Activated T-helper 2 cell treated with anti-CD3 and anti-CD28 coated beads, Interferon-gamma antibody, Interleukin-2, Interleukin-4, amounts not matched to agents 10 μg/mL and 5 μg/mL and 100 μg/mL, durations not matched to agents 14 hours and 24 hours and 36 hours (primary cell): ENCODE measurements at regions of chr18 and their contacts with region 1.

Region 1: GRCh38 chr18:24413148-24413547 is 13.3 kb upstream of the IMPACT start:
- DNase-seq: no peak
- H3K4me3 Mint-ChIP-seq: no peak overlapping the region
- H3K27ac Mint-ChIP-seq: no peak overlapping the region
- H3K4me1 Mint-ChIP-seq: peaks cover 26% of the 10 kb centered on the region
- H3K27me3 Mint-ChIP-seq: peaks cover 41% of the 10 kb centered on the region

Region 2: GRCh38 chr18:24014062-24014985 is 398.8 kb before region 1 on chr18 and contains the start of gene TTC39C:
- intact Hi-C with region 1: loop called (anchors 5 kb)
- DNase-seq: peak; percentile 80
- H3K4me3 Mint-ChIP-seq: peak within 1 kb of the TSS; percentile 92
- H3K27ac Mint-ChIP-seq: peak within 1 kb of the TSS; percentile 84
- H3K4me1 Mint-ChIP-seq: peaks cover 73% of the 10 kb centered on the region
- H3K27me3 Mint-ChIP-seq: no peaks in the 10 kb centered on the region
- total RNA-seq, gene TTC39C: 14.3 and 20.1 TPM in 2 replicates

Region 3: GRCh38 chr18:24368749-24369148 is 44.4 kb before region 1 on chr18:
- intact Hi-C with region 1: loop called (anchors 1 kb)
- DNase-seq: no peak
- H3K4me3 Mint-ChIP-seq: no peak overlapping the region
- H3K27ac Mint-ChIP-seq: no peak overlapping the region
- H3K4me1 Mint-ChIP-seq: peaks cover 25% of the 10 kb centered on the region
- H3K27me3 Mint-ChIP-seq: peaks cover 25% of the 10 kb centered on the region

Region 4: DNA sequence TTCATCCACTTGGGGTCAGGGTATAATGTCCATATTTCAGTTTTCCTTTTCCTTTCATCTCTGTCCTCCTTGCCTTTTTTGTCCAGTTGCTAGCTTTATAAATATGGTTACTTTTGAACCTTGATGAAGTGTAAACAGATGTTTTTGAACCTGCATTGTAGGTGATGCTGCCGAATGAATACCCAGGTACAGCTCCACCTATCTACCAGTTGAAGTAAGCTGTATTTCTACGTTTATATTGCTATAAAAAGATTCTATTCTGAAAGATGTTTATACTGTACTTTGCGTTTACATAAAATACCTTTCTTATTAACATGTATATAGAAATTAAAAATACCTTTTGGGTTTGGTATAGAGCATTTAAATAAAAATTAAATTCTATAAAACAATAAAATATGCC is 15.6 kb after region 1 on chr18:
- intact Hi-C with region 1: loop called (anchors 2 kb)
- DNase-seq: no peak
- H3K4me3 Mint-ChIP-seq: no peak overlapping the region
- H3K27ac Mint-ChIP-seq: no peak overlapping the region
- H3K4me1 Mint-ChIP-seq: peaks cover 14% of the 10 kb centered on the region
- H3K27me3 Mint-ChIP-seq: peaks cover 24% of the 10 kb centered on the region

Region 5: DNA sequence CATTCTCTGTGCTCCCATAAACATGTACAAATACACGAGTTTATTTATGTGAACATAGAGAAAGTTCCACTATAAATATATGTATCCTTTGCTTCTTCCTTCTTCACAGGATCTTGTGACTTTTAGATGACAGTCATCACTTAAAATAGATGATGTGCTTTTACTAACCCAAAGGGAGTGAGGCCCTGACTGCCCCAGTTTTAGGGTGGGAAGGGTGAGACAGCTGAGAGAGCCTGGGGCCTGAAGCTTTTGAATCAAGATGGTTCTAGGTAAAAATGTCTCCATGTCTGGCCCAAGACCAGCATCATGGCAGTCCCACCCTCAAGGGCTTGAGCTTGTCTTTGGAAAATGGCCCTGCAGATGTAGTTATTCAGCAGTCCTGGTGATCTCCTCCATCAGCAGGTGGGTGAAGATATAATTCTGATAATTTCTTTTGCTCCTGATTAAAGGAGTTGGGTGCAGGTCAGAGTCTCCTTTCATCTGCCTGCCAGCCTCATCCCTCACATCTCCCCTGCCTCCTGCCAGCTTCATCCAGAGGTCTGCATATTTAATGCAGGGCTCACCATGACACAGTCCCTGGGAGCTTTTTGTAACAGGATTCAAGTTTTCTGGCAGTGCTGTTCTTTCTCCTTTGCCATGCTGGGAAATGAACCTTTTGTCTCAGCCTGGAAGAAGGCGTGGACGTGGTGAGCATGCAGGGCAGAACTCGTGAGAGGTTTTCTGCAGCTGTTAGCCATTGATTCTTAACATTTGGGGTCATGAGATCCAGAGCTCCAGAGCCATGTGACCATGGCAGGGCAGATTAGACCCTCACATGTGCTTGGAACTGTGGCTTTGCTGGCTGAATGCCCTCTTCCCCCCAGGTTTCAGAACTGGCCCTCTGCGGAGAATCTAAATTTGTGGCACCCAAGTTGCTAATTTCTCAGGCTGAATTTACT is 50.0 kb after region 1 on chr18:
- intact Hi-C with region 1: loop called (anchors 1 kb)
- DNase-seq: no peak
- H3K4me3 Mint-ChIP-seq: no peak overlapping the region
- H3K27ac Mint-ChIP-seq: no peak overlapping the region
- H3K4me1 Mint-ChIP-seq: peaks cover 55% of the 10 kb centered on the region
- H3K27me3 Mint-ChIP-seq: peaks cover 34% of the 10 kb centered on the region

Region 6: GRCh38 chr18:24482821-24483220 is 69.7 kb after region 1 on chr18:
- intact Hi-C with region 1: no loop called
- DNase-seq: no peak
- H3K4me3 Mint-ChIP-seq: no peak overlapping the region
- H3K27ac Mint-ChIP-seq: no peak overlapping the region
- H3K4me1 Mint-ChIP-seq: peaks cover 4% of the 10 kb centered on the region
- H3K27me3 Mint-ChIP-seq: peaks cover 65% of the 10 kb centered on the region

Region 7: DNA sequence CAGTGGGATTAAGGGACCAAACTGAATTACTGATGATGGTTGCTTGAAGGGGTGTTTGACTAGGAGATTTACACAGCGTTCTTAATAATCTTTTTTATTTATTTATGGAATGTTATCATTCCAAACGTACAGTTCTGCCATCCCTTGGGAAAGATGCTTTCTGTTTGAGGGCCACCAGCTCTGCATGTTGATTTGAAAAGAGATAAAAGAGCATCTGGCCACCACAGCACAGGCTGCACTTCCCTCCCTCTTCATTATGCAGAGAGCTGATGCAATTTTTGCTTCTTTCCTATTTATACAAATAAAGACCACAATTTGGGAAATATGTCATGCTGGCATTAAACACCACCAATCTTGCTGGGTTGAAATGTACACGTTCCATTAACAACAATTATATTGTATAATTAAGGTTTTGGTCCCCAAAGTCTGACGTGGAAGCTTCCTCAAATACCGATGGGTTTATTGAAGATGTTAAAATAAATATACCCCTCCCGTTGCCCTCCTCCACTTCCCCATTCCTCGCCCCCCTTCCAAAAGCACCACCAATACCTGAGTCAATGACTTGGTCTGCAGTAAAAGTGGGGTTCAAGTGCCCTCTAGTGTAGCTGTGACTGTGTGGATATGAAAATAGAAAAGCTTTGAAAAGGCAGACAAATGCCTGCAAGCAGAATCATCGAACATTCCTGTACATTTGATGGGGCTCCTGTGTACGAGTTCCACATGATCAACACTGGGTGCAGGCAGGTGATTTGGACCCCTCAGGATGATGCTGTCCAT is 259.2 kb after region 1 on chr18:
- intact Hi-C with region 1: loop called (anchors 1 kb)
- DNase-seq: no peak
- H3K4me3 Mint-ChIP-seq: no peak overlapping the region
- H3K27ac Mint-ChIP-seq: no peak overlapping the region
- H3K4me1 Mint-ChIP-seq: peaks cover 25% of the 10 kb centered on the region
- H3K27me3 Mint-ChIP-seq: no peaks in the 10 kb centered on the region